Lower leg skin (tissue), 4 donors: ENCODE measurements at regions of chr19 and their contacts with region 1.

Region 1: GRCh38 chr19:43774103-43774939 is 6.5 kb downstream of the KCNN4 start:
- DNase-seq: no peak
- H3K4me3 ChIP-seq: no peak overlapping the region
- CTCF ChIP-seq: no peak
- POLR2A ChIP-seq: no peak

Region 2: GRCh38 chr19:43687660-43687997 is 86.7 kb before region 1 on chr19:
- intact Hi-C with region 1: no loop called
- DNase-seq: no peak
- H3K4me3 ChIP-seq: no peak overlapping the region
- CTCF ChIP-seq: no peak
- POLR2A ChIP-seq: no peak

Region 3: GRCh38 chr19:43798546-43799409 is 24.5 kb after region 1 on chr19:
- intact Hi-C with region 1: loop called (anchors 2 kb)
- DNase-seq: peak; percentile 53 to 91
- H3K4me3 ChIP-seq: peak overlapping the region; percentile 12
- CTCF ChIP-seq: no peak
- POLR2A ChIP-seq: no peak

Region 4: DNA sequence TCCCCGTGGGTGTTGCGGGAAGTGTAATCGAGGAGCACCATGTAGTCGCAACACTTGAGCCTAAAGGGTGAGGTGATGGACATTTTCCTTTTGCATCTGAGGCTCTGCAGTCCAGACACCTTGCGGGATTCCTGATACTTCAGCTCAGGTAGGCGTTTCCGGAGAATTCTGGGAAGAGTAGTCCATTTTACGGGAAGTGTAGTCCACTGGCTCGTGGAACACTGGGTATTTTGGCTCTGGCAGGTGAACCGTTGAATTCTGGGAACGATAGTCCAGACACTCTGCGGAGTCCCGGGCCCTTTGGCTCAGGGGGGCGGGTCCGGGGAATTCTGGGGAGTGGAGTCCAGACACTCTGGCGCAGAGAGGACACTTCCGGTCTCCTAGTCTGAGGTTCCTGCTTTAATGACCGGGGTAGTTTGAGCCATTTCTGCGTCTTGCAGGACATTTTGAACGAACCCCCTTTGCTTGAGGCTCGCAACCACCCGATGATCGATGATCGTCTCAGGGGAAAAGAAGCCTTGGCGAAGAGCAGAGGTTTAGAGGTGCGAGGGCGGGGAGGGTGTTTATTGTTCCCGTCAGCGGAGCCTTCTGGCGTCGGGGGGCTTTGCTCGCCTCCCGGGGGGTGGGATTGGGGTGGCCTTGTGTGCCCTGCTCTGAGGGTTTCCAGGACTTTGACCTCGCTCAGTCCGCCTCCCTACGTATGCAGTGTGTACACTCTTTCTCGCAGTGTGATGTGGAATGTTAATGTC is 277.5 kb after region 1 on chr19 and contains the start of gene ZNF223:
- intact Hi-C with region 1: no loop called
- DNase-seq: peak; percentile 96 to 98
- H3K4me3 ChIP-seq: peak within 1 kb of the TSS; percentile 43
- CTCF ChIP-seq: no peak
- POLR2A ChIP-seq: no peak
- total RNA-seq, gene ZNF223: 4.8 to 9.7 (median 6.7) TPM